ENCODE measurements at regions of chr6 and their contacts with region 1.

Region 1: GRCh38 chr6:32984605-32985389 is 16.4 kb downstream of the BRD2 start:
- DNase-seq: peak; percentile 77 to 93 (median 83)
- H3K4me3 ChIP-seq: no peak overlapping the region
- H3K4me3 Mint-ChIP-seq: no peak overlapping the region
- H3K27ac ChIP-seq: no peak overlapping the region
- H3K27ac Mint-ChIP-seq: peak overlapping the region; percentile 15 to 90 (median 46)
- H3K4me1 ChIP-seq: peaks cover 11% of the 10 kb centered on the region
- H3K4me1 Mint-ChIP-seq: peaks cover 11 to 35% (median 29%) of the 10 kb centered on the region in 3 donors
- H3K27me3 ChIP-seq: no peaks in the 10 kb centered on the region
- H3K27me3 Mint-ChIP-seq: no peaks in the 10 kb centered on the region

Region 2: DNA sequence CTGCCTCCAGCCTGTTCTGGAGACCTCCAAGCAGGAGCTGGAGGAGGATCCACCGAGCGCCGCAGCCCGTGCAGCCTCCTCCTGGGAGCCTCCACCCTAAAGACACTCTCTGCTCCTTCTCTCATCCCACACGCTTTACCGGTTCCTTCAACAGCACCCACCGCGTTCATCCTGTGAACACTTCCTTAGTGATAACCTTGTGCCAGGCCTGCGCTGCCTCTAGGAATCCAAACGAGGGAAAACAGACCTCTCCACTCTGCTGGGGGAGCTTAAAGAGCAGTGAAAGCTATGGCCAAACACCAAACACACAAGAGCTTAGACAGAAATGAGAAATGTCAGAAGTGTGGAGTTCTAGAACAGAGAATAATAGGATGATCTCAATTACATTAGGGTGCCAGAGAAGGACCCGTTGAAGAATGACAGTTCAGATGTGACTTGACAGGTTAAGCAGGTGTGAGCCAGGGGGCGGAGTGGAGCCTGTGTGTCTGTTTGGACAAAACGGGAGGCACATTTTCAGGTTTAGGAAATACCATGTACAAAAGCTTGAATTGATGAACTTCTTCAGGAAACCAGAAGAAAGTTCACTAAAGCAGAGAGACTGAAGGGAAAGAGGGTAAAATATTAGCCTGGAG is 426.3 kb before region 1 on chr6:
- CTCF ChIA-PET with region 1: no interaction called
- POLR2A ChIA-PET with region 1: no interaction called
- DNase-seq: no peak
- H3K4me3 ChIP-seq: no peak overlapping the region
- H3K4me3 Mint-ChIP-seq: peak overlapping the region in 4 of 7 donors; percentile 40 to 62 (median 52)
- H3K27ac ChIP-seq: no peak overlapping the region
- H3K27ac Mint-ChIP-seq: peak overlapping the region in 2 of 8 donors; percentile 6 to 39
- H3K4me1 ChIP-seq: no peaks in the 10 kb centered on the region
- H3K4me1 Mint-ChIP-seq: peaks cover 6 to 8% (median 7%) of the 10 kb centered on the region in 3 donors
- H3K27me3 ChIP-seq: no peaks in the 10 kb centered on the region
- H3K27me3 Mint-ChIP-seq: no peaks in the 10 kb centered on the region

Region 3: DNA sequence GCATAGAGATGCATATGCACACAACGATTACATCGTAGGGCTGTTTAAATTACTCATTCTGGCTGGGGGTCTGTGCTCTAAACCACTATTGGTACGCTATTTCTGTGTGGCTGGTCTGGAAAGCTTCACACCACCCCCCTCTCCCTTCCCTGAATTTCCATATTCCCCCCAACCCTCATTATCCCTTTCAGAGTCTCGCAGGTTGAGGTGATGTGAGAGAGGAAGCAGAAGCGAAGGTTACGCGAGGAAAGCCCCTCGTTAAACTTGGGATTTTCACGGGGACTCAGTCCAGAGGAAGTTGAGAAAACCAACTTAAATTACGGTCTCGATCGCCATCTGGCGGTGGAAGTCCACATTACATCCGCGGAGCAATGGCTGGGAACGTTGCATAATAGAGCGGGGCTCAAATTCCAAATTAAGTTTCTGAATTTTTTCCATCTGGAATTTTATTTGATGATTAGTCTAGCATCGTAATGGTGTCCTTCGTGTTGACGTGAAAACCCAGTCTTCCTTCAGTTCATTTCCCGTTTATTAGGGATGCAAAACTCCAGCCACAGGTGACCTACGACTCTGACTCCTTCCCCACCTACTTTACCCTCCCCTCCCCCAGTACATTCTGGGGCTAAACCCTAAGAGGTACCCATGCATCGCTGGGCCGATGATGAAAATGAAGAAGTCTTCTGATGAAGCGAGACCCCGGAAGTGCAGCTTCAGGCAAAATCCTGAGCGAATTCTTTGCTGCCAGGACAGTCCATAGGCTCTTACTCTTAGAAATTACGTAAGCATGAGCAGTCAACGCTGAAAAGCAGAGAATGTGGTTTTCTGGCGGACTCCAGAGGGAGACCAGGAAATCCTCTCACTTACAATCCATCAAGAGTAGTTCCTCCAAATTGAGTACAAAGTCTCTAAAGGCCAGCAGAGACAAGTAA is 187.7 kb before region 1 on chr6:
- CTCF ChIA-PET with region 1: no interaction called
- POLR2A ChIA-PET with region 1: no interaction called
- DNase-seq: peak; percentile 58 to 79 (median 72)
- H3K4me3 ChIP-seq: peak overlapping the region; percentile 20
- H3K4me3 Mint-ChIP-seq: peak overlapping the region in 6 of 7 donors; percentile 53 to 74 (median 59)
- H3K27ac ChIP-seq: no peak overlapping the region
- H3K27ac Mint-ChIP-seq: peak overlapping the region in 1 of 8 donors; percentile 19
- H3K4me1 ChIP-seq: peaks cover 8% of the 10 kb centered on the region
- H3K4me1 Mint-ChIP-seq: peaks cover 10 to 11% (median 10%) of the 10 kb centered on the region in 3 donors
- H3K27me3 ChIP-seq: no peaks in the 10 kb centered on the region
- H3K27me3 Mint-ChIP-seq: peaks cover 26 to 75% of the 10 kb centered on the region in 2 donors

Region 4: GRCh38 chr6:32843979-32844838 is 140.6 kb before region 1 on chr6 and contains the start of gene PSMB8:
- CTCF ChIA-PET with region 1: interaction called, 13 read pairs
- POLR2A ChIA-PET with region 1: interaction called, 4 read pairs
- DNase-seq: peak; percentile 93 to 99 (median 97)
- H3K4me3 ChIP-seq: peak within 1 kb of the TSS; percentile 99
- H3K4me3 Mint-ChIP-seq: peak within 1 kb of the TSS; percentile 94 to 99 (median 97)
- H3K27ac ChIP-seq: peak within 1 kb of the TSS; percentile 99
- H3K27ac Mint-ChIP-seq: peak within 1 kb of the TSS; percentile 96 to 100 (median 100)
- H3K4me1 ChIP-seq: peaks cover 78% of the 10 kb centered on the region
- H3K4me1 Mint-ChIP-seq: peaks cover 76 to 83% (median 82%) of the 10 kb centered on the region in 3 donors
- H3K27me3 ChIP-seq: no peaks in the 10 kb centered on the region
- H3K27me3 Mint-ChIP-seq: peaks cover 0 to 3% of the 10 kb centered on the region in 2 donors
- total RNA-seq, gene PSMB8: 311 to 326 TPM

Region 5: DNA sequence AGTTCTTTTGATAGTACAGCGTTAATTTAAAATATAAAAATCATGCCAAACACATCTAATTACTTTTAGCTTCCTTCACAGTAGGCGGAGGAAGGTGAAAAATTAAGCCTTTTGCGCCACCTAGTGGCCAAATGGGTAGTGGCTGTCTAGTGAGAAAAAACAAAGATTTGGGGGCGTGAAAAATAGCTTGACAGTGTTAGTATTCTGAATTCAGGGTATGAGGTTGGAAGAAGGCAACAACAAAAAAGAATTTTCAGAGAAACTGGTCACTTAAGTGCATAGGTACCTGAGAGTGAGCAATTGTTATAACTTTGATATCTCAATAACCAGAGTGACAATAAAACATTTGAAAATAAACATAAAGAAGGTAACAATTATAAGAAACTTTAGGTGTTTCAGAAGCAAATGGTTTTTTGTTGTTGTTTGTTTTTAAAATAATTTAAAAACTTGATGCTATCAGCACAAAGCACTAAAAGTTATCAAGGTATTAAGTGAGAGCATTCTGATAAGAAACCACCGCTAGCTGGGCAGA is 116.5 kb before region 1 on chr6:
- CTCF ChIA-PET with region 1: interaction called, 21 read pairs
- POLR2A ChIA-PET with region 1: no interaction called
- DNase-seq: peak; percentile 76 to 89 (median 82)
- H3K4me3 ChIP-seq: no peak overlapping the region
- H3K4me3 Mint-ChIP-seq: no peak overlapping the region
- H3K27ac ChIP-seq: no peak overlapping the region
- H3K27ac Mint-ChIP-seq: peak overlapping the region in 1 of 8 donors; percentile 40
- H3K4me1 ChIP-seq: peaks cover 23% of the 10 kb centered on the region
- H3K4me1 Mint-ChIP-seq: peaks cover 24 to 35% (median 31%) of the 10 kb centered on the region in 3 donors
- H3K27me3 ChIP-seq: no peaks in the 10 kb centered on the region
- H3K27me3 Mint-ChIP-seq: peaks cover 4% of the 10 kb centered on the region in 2 donors

Region 6: GRCh38 chr6:32885698-32886286 is 99.0 kb before region 1 on chr6:
- CTCF ChIA-PET with region 1: interaction called, 64 read pairs
- POLR2A ChIA-PET with region 1: no interaction called
- DNase-seq: peak in 2 of 5 donors; percentile 62 to 68
- H3K4me3 ChIP-seq: no peak overlapping the region
- H3K4me3 Mint-ChIP-seq: peak overlapping the region in 1 of 7 donors; percentile 3
- H3K27ac ChIP-seq: no peak overlapping the region
- H3K27ac Mint-ChIP-seq: no peak overlapping the region
- H3K4me1 ChIP-seq: no peaks in the 10 kb centered on the region
- H3K4me1 Mint-ChIP-seq: no peaks in the 10 kb centered on the region
- H3K27me3 ChIP-seq: no peaks in the 10 kb centered on the region
- H3K27me3 Mint-ChIP-seq: no peaks in the 10 kb centered on the region

Region 7: GRCh38 chr6:32906539-32906938 is 78.3 kb before region 1 on chr6:
- CTCF ChIA-PET with region 1: interaction called, 20 read pairs
- POLR2A ChIA-PET with region 1: no interaction called
- DNase-seq: no peak
- H3K4me3 ChIP-seq: no peak overlapping the region
- H3K4me3 Mint-ChIP-seq: no peak overlapping the region
- H3K27ac ChIP-seq: no peak overlapping the region
- H3K27ac Mint-ChIP-seq: no peak overlapping the region
- H3K4me1 ChIP-seq: no peaks in the 10 kb centered on the region
- H3K4me1 Mint-ChIP-seq: no peaks in the 10 kb centered on the region
- H3K27me3 ChIP-seq: no peaks in the 10 kb centered on the region
- H3K27me3 Mint-ChIP-seq: peaks cover 2 to 5% of the 10 kb centered on the region in 2 donors

Region 8: GRCh38 chr6:32940656-32941213 is 44.1 kb before region 1 on chr6 and contains the start of gene HLA-DMB:
- CTCF ChIA-PET with region 1: interaction called, 162 read pairs
- POLR2A ChIA-PET with region 1: interaction called, 5 read pairs
- DNase-seq: peak; percentile 6 to 75 (median 68)
- H3K4me3 ChIP-seq: peak within 1 kb of the TSS; percentile 73
- H3K4me3 Mint-ChIP-seq: peak within 1 kb of the TSS; percentile 88 to 97 (median 95)
- H3K27ac ChIP-seq: peak within 1 kb of the TSS; percentile 73
- H3K27ac Mint-ChIP-seq: peak within 1 kb of the TSS; percentile 94 to 99 (median 98)
- H3K4me1 ChIP-seq: peaks cover 58% of the 10 kb centered on the region
- H3K4me1 Mint-ChIP-seq: peaks cover 56 to 70% (median 64%) of the 10 kb centered on the region in 3 donors
- H3K27me3 ChIP-seq: no peaks in the 10 kb centered on the region
- H3K27me3 Mint-ChIP-seq: peaks cover 0 to 1% of the 10 kb centered on the region in 2 donors
- total RNA-seq, gene HLA-DMB: 4.3 to 5.3 TPM

Region 9: DNA sequence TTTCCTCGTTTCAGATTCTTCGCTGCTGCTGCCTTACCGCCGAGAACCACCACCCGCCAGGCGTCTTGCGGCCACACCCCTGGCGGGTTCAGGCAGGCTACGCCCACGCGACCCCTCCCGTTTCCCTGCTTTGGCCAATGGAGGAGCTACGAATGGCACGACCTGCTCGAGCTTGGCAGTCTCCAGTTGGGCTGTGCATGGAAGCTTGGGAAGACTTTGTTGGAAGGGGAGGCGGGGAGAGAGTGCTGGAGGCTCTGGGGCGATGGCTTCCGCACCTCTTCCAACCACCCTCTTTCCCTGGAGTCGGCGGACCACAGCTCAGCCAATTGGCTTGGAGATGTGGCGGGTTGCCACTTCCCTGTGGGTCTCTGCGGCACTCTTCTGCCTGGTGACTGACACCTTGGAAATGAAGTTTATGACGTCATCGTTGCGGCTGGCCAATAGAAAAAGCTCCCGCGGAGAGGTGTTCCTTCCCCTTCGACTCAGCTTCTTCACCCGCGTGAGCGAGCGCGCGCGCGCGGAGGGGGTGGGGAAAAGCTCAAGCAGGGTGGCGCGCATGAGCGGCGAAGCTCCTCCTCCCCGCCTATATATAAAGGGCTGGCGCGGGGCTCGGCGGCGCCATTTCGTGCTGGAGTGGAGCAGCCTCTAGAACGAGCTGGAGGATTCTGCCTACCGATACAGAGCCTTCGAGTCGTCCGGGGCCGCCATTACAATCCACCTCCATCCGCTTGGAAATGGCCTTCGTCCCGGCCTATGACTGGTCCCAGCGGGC is 13.0 kb before region 1 on chr6:
- CTCF ChIA-PET with region 1: interaction called, 248 read pairs
- POLR2A ChIA-PET with region 1: interaction called, 62 read pairs
- DNase-seq: peak; percentile 99 to 100 (median 100)
- H3K4me3 ChIP-seq: peak overlapping the region; percentile 96
- H3K4me3 Mint-ChIP-seq: peak overlapping the region; percentile 96 to 100 (median 97)
- H3K27ac ChIP-seq: peak overlapping the region; percentile 97
- H3K27ac Mint-ChIP-seq: peak overlapping the region; percentile 96 to 100 (median 99)
- H3K4me1 ChIP-seq: peaks cover 33% of the 10 kb centered on the region
- H3K4me1 Mint-ChIP-seq: peaks cover 37 to 50% (median 41%) of the 10 kb centered on the region in 3 donors
- H3K27me3 ChIP-seq: no peaks in the 10 kb centered on the region
- H3K27me3 Mint-ChIP-seq: peaks cover 0 to 19% of the 10 kb centered on the region in 2 donors